ENCODE measurements at regions of chr16 and their contacts with region 1.

Region 1: DNA sequence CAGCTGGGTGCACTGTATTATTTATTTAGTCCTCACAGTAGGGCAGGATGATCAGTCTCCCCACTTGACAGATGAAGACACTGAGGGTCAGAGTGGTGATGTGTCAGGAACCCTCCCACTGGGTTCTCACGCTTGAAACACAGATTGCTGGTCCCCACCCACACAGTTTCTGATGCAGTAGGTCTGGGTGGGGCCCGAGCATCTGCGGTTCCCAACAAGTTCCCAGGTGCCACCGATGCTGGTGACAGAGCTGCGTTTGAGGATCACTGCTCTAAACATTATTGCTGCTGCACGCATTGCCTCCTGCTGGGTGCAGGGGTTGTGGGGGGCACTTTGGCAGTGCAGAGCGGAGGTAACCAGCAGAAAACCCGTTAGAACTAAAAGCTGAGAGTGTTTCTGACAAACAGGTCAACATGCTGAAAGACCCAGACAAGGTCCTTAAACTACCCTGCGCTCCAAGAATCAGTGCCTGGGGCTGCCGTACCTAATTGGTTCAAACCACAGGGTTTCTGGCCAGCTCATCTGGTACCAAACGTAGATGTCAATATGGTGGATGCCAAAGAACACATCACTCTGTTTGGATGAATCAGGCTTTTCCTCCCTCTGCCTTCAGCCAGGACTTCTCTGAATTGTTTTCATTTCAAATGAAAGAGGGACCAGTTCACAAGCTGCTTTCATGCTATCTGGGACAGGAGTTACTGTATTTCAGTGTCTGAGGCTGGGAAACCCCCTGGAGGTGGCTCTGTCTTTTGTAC is 76.0 kb downstream of the ABCC1 start:
- DNase-seq: peak; percentile 86
- H3K4me3 Mint-ChIP-seq: peak overlapping the region; percentile 52
- H3K27ac Mint-ChIP-seq: peak overlapping the region; percentile 97
- H3K4me1 Mint-ChIP-seq: peaks cover 37% of the 10 kb centered on the region
- H3K27me3 Mint-ChIP-seq: no peaks in the 10 kb centered on the region

Region 2: GRCh38 chr16:15899538-15900100 is 125.8 kb before region 1 on chr16:
- CTCF ChIA-PET with region 1: no interaction called
- POLR2A ChIA-PET with region 1: no interaction called
- intact Hi-C with region 1: loop called (anchors 1 kb)
- DNase-seq: peak; percentile 80
- H3K4me3 Mint-ChIP-seq: no peak overlapping the region
- H3K27ac Mint-ChIP-seq: no peak overlapping the region
- H3K4me1 Mint-ChIP-seq: peaks cover 28% of the 10 kb centered on the region
- H3K27me3 Mint-ChIP-seq: no peaks in the 10 kb centered on the region

Region 3: DNA sequence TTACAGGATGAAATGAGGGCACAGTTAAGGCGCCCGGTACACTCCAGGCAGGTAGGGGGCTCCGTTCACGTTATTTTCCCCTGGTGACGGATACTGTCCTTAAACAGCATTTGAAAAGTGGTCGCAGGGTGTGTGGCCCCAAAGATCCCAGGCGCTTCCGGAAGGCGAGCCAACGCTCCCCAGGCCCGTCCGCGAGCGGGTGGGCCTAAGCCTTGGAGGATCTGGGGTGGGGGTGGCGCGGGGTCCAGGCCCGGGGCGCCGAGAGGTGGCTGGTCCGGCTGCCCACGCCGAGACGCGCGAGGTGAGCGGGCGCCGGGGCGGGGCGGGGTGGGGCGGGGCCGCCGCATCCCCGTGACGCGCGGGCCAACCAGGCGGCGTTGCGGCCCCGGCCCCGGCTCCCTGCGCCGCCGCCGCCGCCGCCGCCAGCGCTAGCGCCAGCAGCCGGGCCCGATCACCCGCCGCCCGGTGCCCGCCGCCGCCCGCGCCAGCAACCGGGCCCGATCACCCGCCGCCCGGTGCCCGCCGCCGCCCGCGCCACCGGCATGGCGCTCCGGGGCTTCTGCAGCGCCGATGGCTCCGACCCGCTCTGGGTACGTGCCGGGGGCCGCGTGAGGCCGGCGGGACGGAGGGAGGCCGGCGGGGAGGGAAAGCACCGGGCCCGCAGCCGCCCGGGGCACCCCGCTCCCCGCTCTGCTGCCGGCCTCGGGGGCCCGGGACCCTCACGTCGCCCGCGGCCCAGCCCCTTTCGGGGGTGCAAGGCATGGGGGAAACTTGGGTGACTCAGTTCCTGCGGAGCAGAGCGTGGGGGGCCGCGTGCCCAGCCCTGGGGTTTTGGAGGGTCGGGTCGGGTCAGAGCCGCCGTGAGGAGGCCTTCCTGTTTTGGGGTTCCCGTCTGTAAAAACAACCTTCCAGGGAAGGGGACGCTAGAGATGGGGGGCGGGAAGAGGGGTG is 75.9 kb before region 1 on chr16 and contains the start of gene ABCC1:
- CTCF ChIA-PET with region 1: interaction called, 3 read pairs
- POLR2A ChIA-PET with region 1: interaction called, 4 read pairs
- intact Hi-C with region 1: loop called (anchors 1 kb)
- DNase-seq: peak; percentile 60
- H3K4me3 Mint-ChIP-seq: peak within 1 kb of the TSS; percentile 99
- H3K27ac Mint-ChIP-seq: peak within 1 kb of the TSS; percentile 96
- H3K4me1 Mint-ChIP-seq: peaks cover 50% of the 10 kb centered on the region
- H3K27me3 Mint-ChIP-seq: no peaks in the 10 kb centered on the region
- total RNA-seq, gene ABCC1: 49.1 to 50.3 TPM

Region 4: DNA sequence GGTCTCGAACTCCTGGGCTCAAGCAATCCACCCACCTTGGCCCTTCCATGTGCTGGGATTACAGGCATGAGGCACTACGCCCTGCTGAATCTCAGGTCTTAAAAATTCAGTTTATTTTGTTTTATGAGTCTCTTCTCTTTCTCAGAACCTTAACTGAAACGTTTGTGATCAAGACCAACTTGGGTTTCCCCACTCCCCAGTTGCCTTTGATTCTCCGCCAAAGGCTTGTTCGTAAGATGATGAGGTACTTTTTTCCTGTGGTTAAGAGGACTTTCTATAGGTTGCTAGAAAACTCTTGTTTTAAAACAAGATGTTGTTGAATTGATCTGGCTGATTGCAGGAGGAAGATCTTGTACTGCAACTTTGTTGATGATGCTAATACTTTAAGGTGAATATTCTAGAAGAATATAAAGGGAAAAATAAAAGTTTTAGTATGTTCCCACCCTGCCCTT is 64.3 kb before region 1 on chr16:
- CTCF ChIA-PET with region 1: no interaction called
- POLR2A ChIA-PET with region 1: interaction called, 3 read pairs
- intact Hi-C with region 1: loop called (anchors 1 kb)
- DNase-seq: peak; percentile 86
- H3K4me3 Mint-ChIP-seq: peak overlapping the region; percentile 78
- H3K27ac Mint-ChIP-seq: peak overlapping the region; percentile 100
- H3K4me1 Mint-ChIP-seq: peaks cover 84% of the 10 kb centered on the region
- H3K27me3 Mint-ChIP-seq: no peaks in the 10 kb centered on the region

Region 5: GRCh38 chr16:15996432-15997109 is 28.8 kb before region 1 on chr16:
- CTCF ChIA-PET with region 1: no interaction called
- POLR2A ChIA-PET with region 1: no interaction called
- intact Hi-C with region 1: no loop called
- DNase-seq: no peak
- H3K4me3 Mint-ChIP-seq: no peak overlapping the region
- H3K27ac Mint-ChIP-seq: peak overlapping the region; percentile 43
- H3K4me1 Mint-ChIP-seq: peaks cover 44% of the 10 kb centered on the region
- H3K27me3 Mint-ChIP-seq: no peaks in the 10 kb centered on the region

Measured in activated CD4-positive, alpha-beta memory T cell treated with anti-CD3 and anti-CD28 coated beads for 36 hours (primary cell).